CD8-positive, alpha-beta T cell (primary cell): ENCODE measurements at regions of chr9 and their contacts with region 1.

Region 1: GRCh38 chr9:74044844-74045243 is 452.3 kb upstream of the RORB start:
- DNase-seq: no peak
- ATAC-seq: no peak
- H3K4me3 ChIP-seq: no peak overlapping the region
- H3K4me3 Mint-ChIP-seq: no peak overlapping the region
- H3K27ac ChIP-seq: no peak overlapping the region
- H3K27ac Mint-ChIP-seq: no peak overlapping the region
- H3K4me1 ChIP-seq: no peaks in the 10 kb centered on the region
- H3K4me1 Mint-ChIP-seq: no peaks in the 10 kb centered on the region
- H3K27me3 ChIP-seq: no peaks in the 10 kb centered on the region
- H3K27me3 Mint-ChIP-seq: no peaks in the 10 kb centered on the region
- CTCF ChIP-seq: no peak

Region 2: DNA sequence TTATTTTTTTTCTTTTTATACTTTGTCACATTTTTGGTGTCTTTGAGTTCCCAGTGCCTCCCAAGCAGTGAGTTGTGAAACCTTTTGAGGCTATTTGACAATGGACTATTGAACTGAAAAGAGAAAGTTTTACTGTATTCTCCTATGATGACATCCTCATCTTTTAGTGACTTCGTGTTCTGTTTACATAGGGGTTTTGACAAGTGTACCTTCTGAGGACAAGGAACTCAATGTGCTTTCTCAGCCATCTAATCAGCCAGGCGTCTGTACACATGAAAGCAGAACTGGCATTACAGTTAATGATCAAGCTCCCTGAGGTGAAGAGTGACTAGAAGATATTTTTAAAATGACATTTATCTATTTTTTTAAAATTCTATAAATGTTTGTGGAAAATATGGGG is 717.7 kb before region 1 on chr9:
- CTCF ChIA-PET with region 1: no interaction called
- POLR2A ChIA-PET with region 1: no interaction called
- intact Hi-C with region 1: no loop called
- DNase-seq: no peak
- ATAC-seq: no peak
- H3K4me3 ChIP-seq: no peak overlapping the region
- H3K4me3 Mint-ChIP-seq: no peak overlapping the region
- H3K27ac ChIP-seq: no peak overlapping the region
- H3K27ac Mint-ChIP-seq: no peak overlapping the region
- H3K4me1 ChIP-seq: no peaks in the 10 kb centered on the region
- H3K4me1 Mint-ChIP-seq: no peaks in the 10 kb centered on the region
- H3K27me3 ChIP-seq: no peaks in the 10 kb centered on the region
- H3K27me3 Mint-ChIP-seq: no peaks in the 10 kb centered on the region
- CTCF ChIP-seq: no peak

Region 3: DNA sequence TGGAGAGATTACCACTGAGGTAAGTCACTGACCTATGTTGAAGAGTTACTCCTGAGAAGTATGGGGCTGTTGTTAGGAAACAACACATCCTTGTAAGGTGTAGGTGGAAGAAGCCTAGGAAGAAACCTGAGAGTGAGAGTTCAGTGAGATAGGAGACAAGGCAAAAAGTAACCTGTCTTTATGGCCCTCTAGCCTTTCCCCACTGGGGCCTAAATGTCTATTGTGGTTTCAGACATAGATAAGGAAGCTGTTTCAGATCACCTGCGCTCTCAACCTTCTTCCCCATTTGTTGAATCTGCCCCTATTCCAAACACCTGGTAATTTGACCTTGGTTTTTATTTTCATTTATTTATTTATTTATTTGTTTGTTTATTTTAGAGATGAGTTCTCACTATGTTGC is 55.2 kb after region 1 on chr9:
- CTCF ChIA-PET with region 1: no interaction called
- POLR2A ChIA-PET with region 1: no interaction called
- intact Hi-C with region 1: loop called in 1 of 2 experiments (anchors 5 kb)
- DNase-seq: no peak
- ATAC-seq: no peak
- H3K4me3 ChIP-seq: no peak overlapping the region
- H3K4me3 Mint-ChIP-seq: no peak overlapping the region
- H3K27ac ChIP-seq: no peak overlapping the region
- H3K27ac Mint-ChIP-seq: no peak overlapping the region
- H3K4me1 ChIP-seq: no peaks in the 10 kb centered on the region
- H3K4me1 Mint-ChIP-seq: no peaks in the 10 kb centered on the region
- H3K27me3 ChIP-seq: no peaks in the 10 kb centered on the region
- H3K27me3 Mint-ChIP-seq: no peaks in the 10 kb centered on the region
- CTCF ChIP-seq: no peak